BJ (cell line): ENCODE measurements at regions of chr4 and their contacts with region 1.

Region 1: DNA sequence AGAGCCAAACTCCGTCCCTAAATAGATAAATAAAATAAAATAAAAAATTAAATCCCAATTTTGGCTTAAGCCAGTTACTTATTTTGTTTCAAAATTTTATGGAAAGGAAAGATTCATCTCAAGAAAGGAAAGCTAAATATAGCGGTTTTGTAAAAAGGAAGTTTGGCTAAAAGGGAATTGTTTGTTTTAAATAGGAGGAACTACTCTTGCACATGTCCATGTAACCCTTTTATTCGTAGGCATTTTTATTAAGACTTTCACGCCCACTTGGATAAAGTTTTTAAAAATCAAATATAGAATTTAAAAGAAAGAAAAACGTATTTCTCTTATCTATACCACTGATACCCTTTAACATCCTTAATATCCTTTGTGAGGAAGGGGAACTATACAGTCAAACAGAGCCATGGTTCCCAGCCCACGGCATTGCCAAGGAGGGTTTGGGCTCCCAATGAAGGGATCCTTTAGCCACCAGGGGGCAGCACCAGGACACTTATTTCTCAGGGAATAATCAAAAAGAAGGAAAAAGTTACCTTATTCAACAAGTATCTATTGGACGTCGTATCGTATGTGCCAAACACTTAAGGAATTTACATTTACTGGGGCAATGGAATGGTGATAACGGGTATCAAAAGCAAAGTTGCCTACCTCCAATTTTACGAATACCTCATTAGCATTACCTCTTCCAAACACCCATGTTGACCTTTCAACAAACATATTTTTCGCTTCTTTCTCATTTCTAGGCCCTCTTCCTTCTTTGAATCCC is 27.7 kb downstream of the CDKN2AIP start:
- DNase-seq: no peak
- H3K4me3 ChIP-seq: no peak overlapping the region
- H3K27me3 ChIP-seq: no peaks in the 10 kb centered on the region
- CTCF ChIP-seq: peak; percentile 81

Region 2: GRCh38 chr4:183602557-183603027 is 130.5 kb after region 1 on chr4:
- CTCF ChIA-PET with region 1: interaction called, 14 read pairs
- POLR2A ChIA-PET with region 1: no interaction called
- DNase-seq: no peak
- H3K4me3 ChIP-seq: no peak overlapping the region
- H3K27me3 ChIP-seq: no peaks in the 10 kb centered on the region
- CTCF ChIP-seq: peak; percentile 45; the same call in 1 of the 2 replicates